ENCODE measurements at regions of chr14 and their contacts with region 1.

Region 1: GRCh38 chr14:21965042-21965441 is 291.4 kb upstream of the OR4E1 start:
- DNase-seq: peak; percentile 72
- H3K4me3 Mint-ChIP-seq: peak overlapping the region; percentile 49
- H3K27ac Mint-ChIP-seq: peak overlapping the region; percentile 49
- H3K4me1 Mint-ChIP-seq: peaks cover 43% of the 10 kb centered on the region
- H3K27me3 Mint-ChIP-seq: no peaks in the 10 kb centered on the region

Region 2: DNA sequence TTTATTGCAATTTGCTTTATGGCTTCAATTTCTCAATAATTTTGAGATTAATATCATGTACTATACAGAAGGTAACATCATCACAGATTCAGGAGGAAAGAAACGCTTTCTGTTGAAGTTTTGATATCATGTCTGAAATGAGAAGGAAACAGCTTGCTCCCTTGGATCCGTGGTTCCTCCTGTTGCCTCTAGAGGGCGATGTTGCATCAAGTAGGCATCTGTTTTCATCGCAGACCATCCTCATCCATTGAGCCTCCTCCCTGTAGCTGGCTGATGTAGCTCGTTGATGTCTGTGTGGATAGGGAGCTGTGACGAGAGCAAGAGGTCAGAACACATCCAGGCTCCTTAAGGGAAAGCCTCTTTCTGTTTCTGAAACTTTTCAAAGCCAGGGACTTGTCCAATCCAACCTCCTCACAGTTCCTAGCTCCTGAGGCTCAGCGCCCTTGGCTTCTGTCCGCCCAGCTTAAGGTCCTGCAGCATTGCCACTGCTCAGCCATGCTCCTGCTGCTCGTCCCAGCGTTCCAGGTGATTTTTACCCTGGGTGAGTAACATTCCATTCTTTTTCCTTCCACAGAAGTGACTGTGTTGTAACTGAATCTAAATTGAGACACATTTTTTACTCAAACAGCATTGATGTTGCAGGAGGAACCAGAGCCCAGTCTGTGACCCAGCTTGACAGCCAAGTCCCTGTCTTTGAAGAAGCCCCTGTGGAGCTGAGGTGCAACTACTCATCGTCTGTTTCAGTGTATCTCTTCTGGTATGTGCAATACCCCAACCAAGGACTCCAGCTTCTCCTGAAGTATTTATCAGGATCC is 13.3 kb after region 1 on chr14:
- CTCF ChIA-PET with region 1: interaction called, 10 read pairs
- DNase-seq: peak; percentile 72
- H3K4me3 Mint-ChIP-seq: peak overlapping the region; percentile 75
- H3K27ac Mint-ChIP-seq: peak overlapping the region; percentile 88
- H3K4me1 Mint-ChIP-seq: peaks cover 31% of the 10 kb centered on the region
- H3K27me3 Mint-ChIP-seq: peaks cover 12% of the 10 kb centered on the region